Esophagus muscularis mucosa (tissue), 4 donors: ENCODE measurements at regions of chr2 and their contacts with region 1.

Region 1: DNA sequence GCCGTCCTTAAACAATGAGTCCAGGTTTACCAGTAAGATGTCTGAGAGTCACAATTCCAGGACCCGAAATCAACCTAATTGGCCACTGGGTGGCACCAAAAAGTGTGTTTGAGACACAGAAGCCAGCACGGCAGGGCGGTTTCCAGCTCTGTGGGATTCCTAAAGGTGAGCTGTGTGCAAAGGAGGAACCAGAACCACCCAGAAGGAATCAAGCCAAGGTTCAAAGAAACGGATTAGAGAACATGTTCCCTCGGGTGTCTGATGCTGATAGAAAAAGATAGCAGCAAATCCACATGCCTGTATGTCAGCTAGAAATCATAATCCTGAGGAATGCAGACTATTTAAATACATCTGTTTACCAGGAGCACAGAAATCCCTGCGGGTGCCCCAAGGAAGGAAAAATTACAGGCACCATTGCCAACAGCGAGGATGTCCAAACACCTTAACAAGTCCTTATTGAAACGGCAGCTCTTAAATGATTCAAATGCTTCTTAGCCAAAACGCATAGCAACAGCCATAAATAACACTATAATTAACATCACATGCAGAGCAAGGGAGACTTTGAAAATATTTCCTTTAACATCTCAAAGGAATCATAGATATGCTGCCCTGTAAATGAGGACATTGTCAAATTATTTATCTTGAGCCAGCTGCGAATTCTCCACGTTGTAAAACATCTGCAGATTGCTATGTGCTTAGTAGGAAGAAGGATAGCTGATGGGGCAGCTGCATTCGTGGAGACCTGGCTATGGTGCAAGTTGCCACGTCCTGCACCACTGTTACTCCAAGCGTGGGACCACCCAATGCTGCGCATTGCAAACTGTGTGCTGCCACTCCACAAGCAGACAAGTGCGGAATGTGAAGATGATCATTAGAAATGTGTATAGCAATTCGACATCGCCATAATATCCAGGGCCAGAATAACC is 318.7 kb upstream of the NCKAP5 start:
- DNase-seq: peak; percentile 91
- H3K4me3 ChIP-seq: no peak overlapping the region
- H3K27ac ChIP-seq: peak overlapping the region in 1 of 4 donors; percentile 52
- H3K4me1 ChIP-seq: peaks cover 0 to 17% (median 15%) of the 10 kb centered on the region in 4 donors
- H3K27me3 ChIP-seq: no peaks in the 10 kb centered on the region
- CTCF ChIP-seq: peak; percentile 55 to 66 (median 57)
- EP300 ChIP-seq: no peak
- POLR2A ChIP-seq: no peak

Region 2: DNA sequence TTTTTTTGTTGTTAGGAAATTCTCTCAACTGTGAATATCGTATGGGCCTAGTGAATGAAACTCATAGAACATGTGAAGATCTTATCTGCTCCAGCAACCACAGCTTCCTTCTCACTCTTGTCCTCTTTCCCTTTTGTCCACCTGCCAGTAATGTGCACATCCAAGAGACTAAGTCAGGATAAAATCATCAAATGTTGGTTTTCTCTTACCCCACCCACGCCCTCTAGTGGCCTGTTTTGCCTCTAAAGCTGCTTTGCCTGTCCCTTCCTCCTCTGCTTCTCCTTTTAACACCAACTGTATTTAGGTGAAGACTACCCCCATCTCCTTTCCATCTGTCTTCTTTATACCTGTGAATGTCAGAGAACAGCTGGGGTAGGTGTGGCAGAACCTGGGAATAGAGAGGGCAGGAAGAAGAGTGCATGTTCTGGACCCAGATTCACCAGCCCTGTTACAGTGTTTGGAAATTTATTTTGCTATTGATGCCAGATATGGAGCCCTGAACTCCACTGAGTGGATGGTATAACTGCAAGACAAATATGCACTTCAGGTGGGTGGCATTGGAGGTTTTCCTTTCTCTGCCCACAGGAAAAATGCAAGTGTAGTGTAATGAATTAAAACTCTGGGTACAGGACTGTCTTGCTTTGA is 358.5 kb after region 1 on chr2:
- intact Hi-C with region 1: loop called (anchors 5 kb)
- DNase-seq: peak; percentile 93
- H3K4me3 ChIP-seq: no peak overlapping the region
- H3K27ac ChIP-seq: no peak overlapping the region
- H3K4me1 ChIP-seq: peaks cover 19 to 37% (median 21%) of the 10 kb centered on the region in 4 donors
- H3K27me3 ChIP-seq: no peaks in the 10 kb centered on the region
- CTCF ChIP-seq: peak; percentile 63 to 77 (median 66)
- EP300 ChIP-seq: no peak
- POLR2A ChIP-seq: no peak

Region 3: DNA sequence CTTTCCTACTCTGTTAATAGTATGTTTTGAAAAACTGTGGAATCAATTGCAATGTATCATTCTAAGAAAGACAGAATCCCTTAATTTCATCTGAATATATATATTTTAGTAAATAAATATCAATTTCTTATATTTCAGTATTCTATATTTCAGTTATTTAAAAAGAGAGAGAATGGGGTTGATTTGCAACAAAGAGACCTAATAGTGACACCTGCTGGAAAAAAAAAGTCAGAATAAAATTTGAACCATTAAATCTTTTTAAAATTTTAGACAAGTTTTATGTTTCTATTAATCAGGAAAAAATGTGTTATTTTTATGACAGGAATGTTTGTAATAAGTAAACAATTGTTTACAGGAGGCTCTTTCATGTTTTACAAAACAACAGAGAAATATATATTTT is 1010.9 kb after region 1 on chr2:
- intact Hi-C with region 1: loop called (anchors 10 kb)
- DNase-seq: no peak
- H3K4me3 ChIP-seq: no peak overlapping the region
- H3K27ac ChIP-seq: no peak overlapping the region
- H3K4me1 ChIP-seq: no peaks in the 10 kb centered on the region
- H3K27me3 ChIP-seq: no peaks in the 10 kb centered on the region
- CTCF ChIP-seq: peak in 2 of 3 experiments; percentile 24 to 32
- EP300 ChIP-seq: no peak
- POLR2A ChIP-seq: no peak